GM12878 (cell line): ENCODE measurements at regions of chr6 and their contacts with region 1.

Region 1: GRCh38 chr6:24891004-24891403 is 44.8 kb downstream of the RIPOR2 start:
- DNase-seq: no peak
- ATAC-seq: no peak
- H3K4me3 ChIP-seq: no peak overlapping the region
- H3K27ac ChIP-seq: no peak overlapping the region
- H3K4me1 ChIP-seq: peaks cover 15% of the 10 kb centered on the region
- H3K27me3 ChIP-seq: no peaks in the 10 kb centered on the region
- CTCF ChIP-seq: no peak
- EP300 ChIP-seq: no peak
- POLR2A ChIP-seq: no peak
- RAD21 ChIP-seq: no peak

Region 2: GRCh38 chr6:24802271-24803059 is 88.5 kb before region 1 on chr6:
- CTCF ChIA-PET with region 1: no interaction called
- POLR2A ChIA-PET with region 1: no interaction called
- RAD21 ChIA-PET with region 1: no interaction called
- SMC1A ChIA-PET with region 1: no interaction called
- in situ Hi-C with region 1: no loop called
- intact Hi-C with region 1: no loop called
- DNase-seq: no peak
- ATAC-seq: no peak
- H3K4me3 ChIP-seq: no peak overlapping the region
- H3K27ac ChIP-seq: no peak overlapping the region
- H3K4me1 ChIP-seq: no peaks in the 10 kb centered on the region
- H3K27me3 ChIP-seq: no peaks in the 10 kb centered on the region
- CTCF ChIP-seq: no peak
- EP300 ChIP-seq: no peak
- POLR2A ChIP-seq: no peak
- RAD21 ChIP-seq: no peak

Region 3: DNA sequence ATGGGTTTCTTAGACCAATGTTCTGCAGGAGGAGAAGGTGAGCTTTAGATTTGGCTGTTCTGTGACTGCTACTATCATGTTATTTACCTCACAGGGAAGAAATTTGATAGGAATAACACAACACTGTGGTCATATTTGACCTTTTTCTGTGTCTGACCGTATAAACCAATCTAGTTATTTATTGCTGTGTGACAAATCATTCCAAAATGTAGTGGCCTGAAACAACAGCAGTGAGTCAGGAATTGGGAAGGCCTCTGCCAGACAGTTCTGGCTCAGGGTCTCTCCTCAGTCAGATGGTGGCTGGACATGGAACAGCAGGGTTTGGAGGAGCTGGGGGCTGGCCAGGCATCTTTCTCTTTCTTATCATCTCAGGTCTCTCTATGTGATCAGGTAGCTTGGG is 11.8 kb after region 1 on chr6:
- CTCF ChIA-PET with region 1: interaction called, 17 read pairs
- POLR2A ChIA-PET with region 1: interaction called, 3 read pairs
- RAD21 ChIA-PET with region 1: interaction called, 7 read pairs
- SMC1A ChIA-PET with region 1: interaction called, 14 read pairs
- in situ Hi-C with region 1: no loop called
- intact Hi-C with region 1: no loop called
- DNase-seq: no peak
- ATAC-seq: no peak
- H3K4me3 ChIP-seq: no peak overlapping the region
- H3K27ac ChIP-seq: no peak overlapping the region
- H3K4me1 ChIP-seq: no peaks in the 10 kb centered on the region
- H3K27me3 ChIP-seq: no peaks in the 10 kb centered on the region
- CTCF ChIP-seq: no peak
- EP300 ChIP-seq: no peak
- POLR2A ChIP-seq: no peak
- RAD21 ChIP-seq: no peak